ENCODE measurements at regions of chr2 and their contacts with region 1.

Region 1: DNA sequence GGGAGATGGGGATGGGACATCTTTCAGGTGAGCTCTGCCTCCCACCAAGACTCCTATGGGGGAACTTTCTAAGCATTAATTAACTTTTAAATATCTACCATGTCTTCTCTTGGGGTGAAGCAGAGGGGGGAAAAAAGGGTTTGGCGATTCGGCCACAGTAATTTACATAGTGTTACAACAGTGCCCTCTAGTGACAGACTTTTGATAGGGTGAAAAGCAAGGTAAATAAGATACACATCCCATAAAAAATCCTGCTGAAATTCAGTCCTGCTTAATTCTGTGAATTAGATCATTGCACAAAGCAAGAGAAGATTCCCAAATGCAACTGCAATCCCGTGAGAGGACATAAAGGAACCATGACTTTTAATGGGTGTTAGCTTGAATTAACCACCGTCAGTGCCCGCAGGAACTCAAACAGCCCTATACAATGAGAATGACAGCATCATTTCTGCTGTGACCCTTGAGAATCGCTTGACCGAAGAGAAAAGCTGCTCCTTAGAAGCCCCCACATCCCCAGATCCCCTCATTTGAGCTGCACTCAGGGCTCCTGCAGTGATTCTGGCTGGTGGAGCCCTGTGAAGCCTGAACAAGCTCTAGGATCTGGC is 32.8 kb downstream of the FAM124B start:
- DNase-seq: no peak
- H3K4me3 ChIP-seq: no peak overlapping the region
- CTCF ChIP-seq: peak; percentile 46

Region 2: DNA sequence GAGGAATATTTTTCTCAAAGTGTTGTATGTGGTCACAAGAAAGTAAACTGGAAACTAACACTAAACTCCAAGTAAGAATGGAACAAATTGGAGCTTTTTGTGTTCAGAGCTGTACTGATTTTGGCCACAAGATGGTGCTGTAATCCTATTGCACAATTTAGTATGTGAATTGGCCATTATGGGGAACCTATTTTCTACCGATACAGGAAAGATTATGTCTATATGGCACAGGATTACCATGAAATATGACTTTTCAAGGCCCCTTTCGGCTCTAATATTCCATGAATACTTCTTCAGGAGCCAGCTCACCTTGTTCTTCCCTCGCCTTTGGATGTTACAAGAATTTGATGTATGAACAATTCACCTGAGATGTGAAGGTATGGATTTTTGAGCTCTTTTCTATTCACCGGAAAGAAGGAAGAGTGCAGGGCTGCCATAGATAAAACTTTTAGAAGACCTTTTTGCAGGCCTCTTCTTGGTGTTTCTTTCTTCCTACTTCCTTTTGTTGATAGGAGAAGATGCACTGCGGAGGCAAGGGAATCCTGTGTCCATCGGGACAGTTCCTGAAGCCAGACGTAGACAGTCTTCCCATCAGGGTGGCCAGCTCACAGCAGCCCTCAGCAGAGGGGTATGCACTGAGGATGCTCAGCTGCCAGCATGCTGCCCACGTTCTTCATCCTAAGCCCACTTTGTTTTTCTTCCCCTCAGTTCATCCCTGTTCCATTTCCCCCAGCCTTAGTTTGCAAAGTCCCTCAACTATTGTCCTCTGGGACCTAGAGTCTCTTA is 398.6 kb before region 1 on chr2:
- CTCF ChIA-PET with region 1: interaction called, 95 read pairs
- POLR2A ChIA-PET with region 1: no interaction called
- DNase-seq: no peak
- H3K4me3 ChIP-seq: no peak overlapping the region
- CTCF ChIP-seq: peak; percentile 65

Region 3: GRCh38 chr2:224382973-224383555 is 13.9 kb after region 1 on chr2:
- CTCF ChIA-PET with region 1: interaction called, 45 read pairs
- POLR2A ChIA-PET with region 1: no interaction called
- DNase-seq: no peak
- H3K4me3 ChIP-seq: no peak overlapping the region
- CTCF ChIP-seq: no peak

Region 4: GRCh38 chr2:224401641-224402342 is 32.7 kb after region 1 on chr2 and contains the start of gene FAM124B:
- CTCF ChIA-PET with region 1: interaction called, 19 read pairs
- POLR2A ChIA-PET with region 1: no interaction called
- DNase-seq: no peak
- H3K4me3 ChIP-seq: no peak within 1 kb of the TSS
- CTCF ChIP-seq: no peak

Region 5: GRCh38 chr2:224650815-224651439 is 281.8 kb after region 1 on chr2:
- CTCF ChIA-PET with region 1: interaction called, 214 read pairs
- POLR2A ChIA-PET with region 1: no interaction called
- DNase-seq: peak; percentile 10
- H3K4me3 ChIP-seq: no peak overlapping the region
- CTCF ChIP-seq: peak; percentile 69

Region 6: DNA sequence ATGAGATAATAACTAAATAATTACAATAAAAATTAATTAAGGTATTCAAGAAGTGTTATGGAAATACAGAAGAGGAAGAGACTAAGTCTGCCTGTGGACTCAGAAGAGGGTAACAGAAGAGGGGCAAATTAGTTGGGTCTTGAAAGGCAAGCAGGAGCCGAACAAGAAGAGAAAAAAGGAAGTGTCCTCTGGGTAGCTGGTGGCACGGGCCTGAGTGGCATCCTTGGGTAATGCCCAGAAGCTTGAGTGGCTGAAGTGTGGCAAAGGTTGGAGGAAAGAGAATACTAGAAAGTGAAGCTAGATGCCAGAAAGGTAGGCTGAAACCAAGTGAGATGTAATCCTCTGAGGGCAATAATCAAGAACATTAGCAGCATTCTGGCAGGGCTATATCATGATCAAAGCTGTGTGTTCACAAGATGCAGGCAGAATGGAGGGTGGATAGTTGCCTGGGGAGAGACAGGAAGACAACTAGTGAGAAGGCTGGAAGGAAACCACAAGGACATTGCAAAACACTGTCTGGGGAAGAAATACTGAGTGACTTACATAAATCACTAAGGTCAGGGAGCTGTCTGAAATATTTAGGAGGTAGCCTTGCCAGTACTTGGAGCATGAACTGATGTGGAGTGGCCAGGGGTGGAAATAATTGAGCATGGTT is 656.9 kb after region 1 on chr2:
- CTCF ChIA-PET with region 1: no interaction called
- POLR2A ChIA-PET with region 1: no interaction called
- DNase-seq: peak; percentile 65
- H3K4me3 ChIP-seq: no peak overlapping the region
- CTCF ChIP-seq: no peak

Measured in AG04449 (cell line).